Activated T-helper 1 cell treated with anti-CD3 and anti-CD28 coated beads, Interleukin-12 subunit alpha, Interleukin-12 subunit beta, Interleukin-2, Interleukin-4 antibody, amounts not matched to agents 30 ng/mL and 10 ng/mL and 1 ng/mL, durations not matched to agents 14 hours and 24 hours and 36 hours (primary cell): ENCODE measurements at regions of chr17 and their contacts with region 1.

Region 1: DNA sequence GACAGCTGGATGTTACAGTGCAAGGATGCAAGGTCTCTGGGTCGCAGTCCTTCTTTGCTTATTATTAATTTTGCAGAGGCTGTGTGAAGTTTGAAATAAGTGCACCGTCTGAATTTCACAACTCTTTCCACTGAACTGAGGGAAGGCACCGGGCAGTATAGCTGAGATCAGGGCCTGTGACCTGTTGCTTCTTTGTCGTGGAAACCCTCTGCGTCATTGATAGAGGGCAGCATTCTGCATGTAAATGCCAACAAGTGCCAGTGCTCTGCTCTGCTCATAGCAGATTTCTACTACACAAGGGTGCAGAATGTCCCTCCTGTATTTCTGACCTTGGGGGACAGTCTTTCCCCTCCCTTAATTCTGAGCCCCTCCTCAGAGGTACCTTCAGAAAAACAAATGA is 26.0 kb downstream of the CD300LF start:
- DNase-seq: no peak
- H3K4me3 Mint-ChIP-seq: no peak overlapping the region
- H3K27ac Mint-ChIP-seq: no peak overlapping the region
- H3K4me1 Mint-ChIP-seq: peaks cover 21% of the 10 kb centered on the region
- H3K27me3 Mint-ChIP-seq: peaks cover 21% of the 10 kb centered on the region

Region 2: GRCh38 chr17:74579900-74580299 is 106.9 kb before region 1 on chr17:
- intact Hi-C with region 1: no loop called
- DNase-seq: no peak
- H3K4me3 Mint-ChIP-seq: no peak overlapping the region
- H3K27ac Mint-ChIP-seq: no peak overlapping the region
- H3K4me1 Mint-ChIP-seq: no peaks in the 10 kb centered on the region
- H3K27me3 Mint-ChIP-seq: peaks cover 10% of the 10 kb centered on the region

Region 3: DNA sequence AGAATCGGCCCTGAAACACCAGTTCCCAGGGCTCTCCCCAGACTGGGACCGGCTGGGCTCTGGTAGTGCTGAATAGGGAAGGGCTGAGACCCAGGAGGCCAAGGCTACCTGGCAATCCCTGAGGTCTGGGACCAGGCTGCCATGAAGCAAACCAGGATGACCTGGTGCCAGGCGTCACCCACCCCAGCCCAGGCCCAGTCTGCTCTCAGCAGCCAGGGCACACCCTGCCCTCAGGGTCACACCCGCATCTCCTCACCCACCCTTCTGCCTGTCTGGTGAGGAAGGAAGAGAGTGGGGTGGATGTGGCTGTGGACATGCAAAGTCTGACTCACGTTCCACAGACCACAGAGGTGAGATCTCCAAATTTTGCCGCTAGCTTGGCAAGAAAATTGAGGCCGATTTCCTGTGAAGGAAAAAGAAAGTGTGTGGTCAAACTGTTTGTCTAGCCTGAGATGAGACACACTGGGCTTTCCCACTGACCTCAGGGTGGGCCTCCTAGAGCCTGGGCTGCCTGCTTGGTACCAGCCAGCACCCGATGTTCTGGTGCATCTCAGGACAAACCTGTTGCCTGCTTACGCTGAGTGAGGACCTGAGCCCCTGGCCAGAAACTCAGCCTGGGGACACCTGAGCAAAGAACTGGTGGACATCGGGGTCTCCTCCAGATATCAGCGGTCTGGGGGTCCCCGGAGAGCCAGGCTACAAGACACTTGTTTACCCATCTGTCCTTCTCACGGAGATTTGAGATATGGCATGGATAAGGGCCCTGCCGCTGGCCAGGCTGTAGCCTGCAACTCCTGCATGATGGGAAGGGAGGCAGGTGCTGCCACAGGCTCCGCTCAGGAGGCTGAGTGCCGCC is 44.0 kb after region 1 on chr17:
- intact Hi-C with region 1: loop called (anchors 2 kb)
- DNase-seq: peak; percentile 61
- H3K4me3 Mint-ChIP-seq: no peak overlapping the region
- H3K27ac Mint-ChIP-seq: peak overlapping the region; percentile 71
- H3K4me1 Mint-ChIP-seq: peaks cover 13% of the 10 kb centered on the region
- H3K27me3 Mint-ChIP-seq: peaks cover 4% of the 10 kb centered on the region